ENCODE measurements at regions of chr17 and their contacts with region 1.

Region 1: GRCh38 chr17:6666077-6666521 is 14.5 kb downstream of the C17orf100 start:
- DNase-seq: no peak
- H3K4me3 Mint-ChIP-seq: no peak overlapping the region
- H3K27ac Mint-ChIP-seq: no peak overlapping the region
- H3K4me1 Mint-ChIP-seq: peaks cover 14% of the 10 kb centered on the region
- H3K27me3 Mint-ChIP-seq: peaks cover 24% of the 10 kb centered on the region

Region 2: DNA sequence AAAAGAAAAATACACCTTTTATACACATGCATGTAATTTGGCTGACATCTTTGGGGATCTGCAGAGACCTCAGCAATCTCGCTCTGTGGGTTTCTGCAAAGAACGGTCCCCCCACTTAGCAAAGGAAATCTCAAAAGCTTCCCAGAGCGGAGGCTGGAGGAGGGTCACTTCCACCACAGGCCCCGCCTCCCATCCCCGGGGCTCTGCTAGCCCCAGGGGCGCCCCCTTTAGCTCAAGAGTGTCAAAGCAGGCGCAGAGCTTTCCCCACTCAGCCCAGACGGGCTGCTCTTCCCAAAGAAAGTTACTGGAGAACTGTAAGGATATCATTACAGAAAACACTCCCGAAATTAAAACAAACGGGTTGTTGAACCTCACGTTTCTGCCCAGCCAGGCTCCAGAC is 35.6 kb after region 1 on chr17:
- intact Hi-C with region 1: no loop called
- DNase-seq: no peak
- H3K4me3 Mint-ChIP-seq: no peak overlapping the region
- H3K27ac Mint-ChIP-seq: no peak overlapping the region
- H3K4me1 Mint-ChIP-seq: no peaks in the 10 kb centered on the region
- H3K27me3 Mint-ChIP-seq: peaks cover 1% of the 10 kb centered on the region

Region 3: GRCh38 chr17:6894206-6894528 is 228.1 kb after region 1 on chr17:
- intact Hi-C with region 1: loop called (anchors 10 kb)
- DNase-seq: no peak
- H3K4me3 Mint-ChIP-seq: no peak overlapping the region
- H3K27ac Mint-ChIP-seq: no peak overlapping the region
- H3K4me1 Mint-ChIP-seq: no peaks in the 10 kb centered on the region
- H3K27me3 Mint-ChIP-seq: peaks cover 37% of the 10 kb centered on the region